ENCODE measurements at regions of chr22 and their contacts with region 1.

Region 1: GRCh38 chr22:32341122-32341740 is 16.4 kb upstream of the RFPL3 start:
- DNase-seq: no peak
- ATAC-seq: no peak
- H3K4me3 ChIP-seq: no peak overlapping the region
- H3K27ac ChIP-seq: no peak overlapping the region
- H3K4me1 ChIP-seq: no peaks in the 10 kb centered on the region
- H3K27me3 ChIP-seq: peaks cover 0 to 6% of the 10 kb centered on the region in 2 donors
- CTCF ChIP-seq: no peak
- POLR2A ChIP-seq: no peak

Region 2: GRCh38 chr22:32265882-32266767 is 75.1 kb before region 1 on chr22:
- intact Hi-C with region 1: no loop called
- DNase-seq: peak; percentile 74 to 81 (median 77)
- ATAC-seq: peak; percentile 60
- H3K4me3 ChIP-seq: no peak overlapping the region
- H3K27ac ChIP-seq: no peak overlapping the region
- H3K4me1 ChIP-seq: no peaks in the 10 kb centered on the region
- H3K27me3 ChIP-seq: no peaks in the 10 kb centered on the region
- CTCF ChIP-seq: peak; percentile 67 to 79 (median 78)
- POLR2A ChIP-seq: no peak

Region 3: DNA sequence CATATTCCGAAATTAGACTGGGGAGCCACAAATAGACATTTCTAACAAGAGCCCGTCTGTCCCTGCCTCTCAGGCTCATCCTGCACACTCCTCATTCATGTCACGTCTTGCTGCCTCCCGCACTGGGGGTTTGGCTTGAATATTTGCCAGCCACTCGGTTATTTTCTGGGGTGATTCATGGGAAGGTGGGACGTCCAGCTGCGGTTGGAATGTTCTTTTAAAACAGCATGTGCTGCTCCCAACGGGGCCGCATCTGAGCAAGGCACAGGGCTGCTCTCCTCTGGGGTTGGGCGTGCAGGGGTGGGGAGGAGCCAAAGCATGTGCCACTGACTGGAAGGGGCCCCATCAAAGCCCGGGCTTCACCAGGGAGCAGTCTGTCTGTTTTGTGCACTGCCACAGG is 60.2 kb before region 1 on chr22:
- intact Hi-C with region 1: loop called (anchors 10 kb)
- DNase-seq: no peak
- ATAC-seq: no peak
- H3K4me3 ChIP-seq: no peak overlapping the region
- H3K27ac ChIP-seq: no peak overlapping the region
- H3K4me1 ChIP-seq: no peaks in the 10 kb centered on the region
- H3K27me3 ChIP-seq: no peaks in the 10 kb centered on the region
- CTCF ChIP-seq: no peak
- POLR2A ChIP-seq: no peak

Measured in body of pancreas (tissue), 4 donors.